ENCODE measurements at regions of chr1 and their contacts with region 1.

Region 1: DNA sequence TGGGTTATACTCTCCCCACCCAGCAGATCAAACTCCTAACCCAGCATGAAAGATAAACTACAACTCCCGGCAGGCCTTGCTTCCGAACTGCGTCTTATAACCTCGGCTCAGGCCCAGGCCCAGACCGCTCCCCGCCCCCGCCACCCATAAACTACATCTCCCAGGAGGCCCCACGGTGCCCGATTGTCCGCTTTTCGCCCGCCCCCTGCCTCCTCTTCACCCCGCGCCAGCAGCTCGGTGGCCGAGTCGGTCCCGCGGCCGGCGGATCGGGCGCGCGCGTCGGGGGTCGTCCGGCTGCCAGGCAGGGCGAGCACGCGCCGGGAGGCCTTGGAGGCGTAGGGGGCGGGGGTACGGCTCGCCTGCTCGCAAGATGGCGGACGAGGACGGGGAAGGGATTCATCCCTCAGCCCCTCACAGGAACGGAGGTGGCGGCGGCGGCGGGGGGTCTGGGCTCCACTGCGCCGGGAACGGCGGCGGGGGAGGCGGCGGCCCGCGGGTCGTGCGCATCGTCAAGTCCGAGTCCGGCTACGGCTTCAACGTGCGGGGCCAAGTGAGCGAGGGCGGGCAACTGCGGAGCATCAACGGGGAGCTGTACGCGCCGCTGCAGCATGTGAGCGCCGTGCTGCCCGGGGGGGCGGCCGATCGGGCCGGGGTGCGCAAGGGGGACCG is at the start of gene SNX27:
- DNase-seq: peak; percentile 81
- ATAC-seq: peak; percentile 96
- H3K4me3 Mint-ChIP-seq: peak within 1 kb of the TSS; percentile 95
- H3K27ac Mint-ChIP-seq: peak within 1 kb of the TSS; percentile 79
- H3K4me1 Mint-ChIP-seq: peaks cover 32% of the 10 kb centered on the region
- H3K27me3 Mint-ChIP-seq: peaks cover 9% of the 10 kb centered on the region
- CTCF ChIP-seq: no peak
- total RNA-seq, gene SNX27: 22.2 and 27.6 TPM in 2 replicates

Region 2: DNA sequence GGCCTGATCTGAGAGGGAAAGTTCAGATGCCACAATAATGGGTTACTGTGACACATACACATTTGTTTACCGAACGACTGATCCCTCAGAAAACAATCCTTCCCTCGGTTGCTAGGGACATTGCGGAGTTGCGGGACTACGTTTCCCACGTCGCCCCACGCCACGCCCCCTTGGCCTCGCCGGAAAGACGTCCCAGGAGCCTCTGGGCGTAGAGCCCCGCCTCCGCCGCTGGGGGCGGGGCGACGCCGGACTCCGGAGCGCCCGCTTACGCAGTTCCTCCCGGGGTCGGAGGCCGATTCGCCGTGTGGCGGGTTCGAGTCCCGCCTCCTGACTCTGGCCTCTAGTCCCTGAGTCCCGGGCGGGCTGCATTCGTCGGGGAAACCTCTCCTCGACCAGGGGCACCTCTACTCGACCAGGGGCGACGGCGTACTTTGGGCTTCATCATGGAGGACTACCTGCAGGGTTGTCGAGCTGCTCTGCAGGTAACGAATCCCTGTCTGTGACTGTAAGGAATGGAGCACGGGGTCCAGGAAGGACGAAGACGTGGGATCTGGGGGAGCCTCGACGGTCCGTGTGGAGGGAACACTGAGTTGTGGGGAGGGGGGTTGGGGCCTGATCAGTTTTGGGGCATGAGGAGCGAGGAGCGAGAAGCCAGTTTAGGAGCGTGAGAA is 603.6 kb before region 1 on chr1 and contains the start of gene PRUNE1:
- CTCF ChIA-PET with region 1: no interaction called
- POLR2A ChIA-PET with region 1: no interaction called
- intact Hi-C with region 1: loop called (anchors 5 kb)
- DNase-seq: peak; percentile 91
- ATAC-seq: peak; percentile 94
- H3K4me3 Mint-ChIP-seq: peak within 1 kb of the TSS; percentile 98
- H3K27ac Mint-ChIP-seq: peak within 1 kb of the TSS; percentile 93
- H3K4me1 Mint-ChIP-seq: peaks cover 66% of the 10 kb centered on the region
- H3K27me3 Mint-ChIP-seq: no peaks in the 10 kb centered on the region
- CTCF ChIP-seq: no peak
- total RNA-seq, gene PRUNE1: 12.9 and 14.2 TPM in 2 replicates

Region 3: GRCh38 chr1:151398691-151399065 is 213.3 kb before region 1 on chr1:
- CTCF ChIA-PET with region 1: no interaction called
- POLR2A ChIA-PET with region 1: no interaction called
- intact Hi-C with region 1: no loop called
- DNase-seq: peak; percentile 19
- ATAC-seq: peak; percentile 4
- H3K4me3 Mint-ChIP-seq: peak overlapping the region; percentile 89
- H3K27ac Mint-ChIP-seq: peak overlapping the region; percentile 98
- H3K4me1 Mint-ChIP-seq: peaks cover 31% of the 10 kb centered on the region
- H3K27me3 Mint-ChIP-seq: no peaks in the 10 kb centered on the region
- CTCF ChIP-seq: no peak

Region 4: GRCh38 chr1:151459331-151460046 is 152.5 kb before region 1 on chr1 and contains the start of gene POGZ:
- CTCF ChIA-PET with region 1: no interaction called
- POLR2A ChIA-PET with region 1: interaction called, 3 read pairs
- intact Hi-C with region 1: loop called (anchors 5 kb)
- DNase-seq: peak; percentile 84
- ATAC-seq: peak; percentile 68
- H3K4me3 Mint-ChIP-seq: peak within 1 kb of the TSS; percentile 89
- H3K27ac Mint-ChIP-seq: peak within 1 kb of the TSS; percentile 91
- H3K4me1 Mint-ChIP-seq: peaks cover 40% of the 10 kb centered on the region
- H3K27me3 Mint-ChIP-seq: peaks cover 15% of the 10 kb centered on the region
- CTCF ChIP-seq: no peak
- total RNA-seq, gene POGZ: 121 and 135 TPM in 2 replicates

Region 5: DNA sequence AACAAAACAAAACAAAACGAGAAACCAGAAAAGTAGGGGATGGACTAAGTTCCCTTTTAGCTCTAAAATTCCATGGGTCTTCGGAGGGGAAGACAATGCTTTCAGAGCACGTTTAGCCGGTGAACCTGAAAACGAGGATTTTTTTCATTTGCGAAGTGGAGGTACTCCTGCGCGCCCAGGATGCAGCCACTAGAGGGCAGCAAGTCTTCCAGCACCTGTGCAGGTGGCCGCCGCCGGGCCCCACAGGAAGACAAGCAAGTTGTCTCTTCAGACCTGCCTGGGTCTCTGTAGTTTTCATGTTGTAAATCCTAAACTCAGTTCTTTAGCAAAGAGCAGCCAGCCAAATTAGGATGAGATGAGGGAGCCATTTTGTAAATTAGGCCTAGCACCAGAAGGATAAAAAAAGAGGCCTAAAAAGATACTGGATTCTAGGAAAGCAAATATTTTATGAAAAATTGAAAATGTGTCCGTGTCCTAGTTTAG is 17.8 kb before region 1 on chr1:
- CTCF ChIA-PET with region 1: interaction called, 3 read pairs
- POLR2A ChIA-PET with region 1: no interaction called
- intact Hi-C with region 1: loop called (anchors 2 kb)
- DNase-seq: peak; percentile 66
- ATAC-seq: peak; percentile 97
- H3K4me3 Mint-ChIP-seq: peak overlapping the region; percentile 69
- H3K27ac Mint-ChIP-seq: peak overlapping the region; percentile 46
- H3K4me1 Mint-ChIP-seq: peaks cover 10% of the 10 kb centered on the region
- H3K27me3 Mint-ChIP-seq: peaks cover 11% of the 10 kb centered on the region
- CTCF ChIP-seq: peak; percentile 45

Region 6: GRCh38 chr1:151641229-151641628 is 29.3 kb after region 1 on chr1:
- CTCF ChIA-PET with region 1: no interaction called
- POLR2A ChIA-PET with region 1: no interaction called
- intact Hi-C with region 1: no loop called
- DNase-seq: no peak
- ATAC-seq: peak; percentile 42
- H3K4me3 Mint-ChIP-seq: no peak overlapping the region
- H3K27ac Mint-ChIP-seq: no peak overlapping the region
- H3K4me1 Mint-ChIP-seq: peaks cover 7% of the 10 kb centered on the region
- H3K27me3 Mint-ChIP-seq: no peaks in the 10 kb centered on the region
- CTCF ChIP-seq: no peak

Region 7: DNA sequence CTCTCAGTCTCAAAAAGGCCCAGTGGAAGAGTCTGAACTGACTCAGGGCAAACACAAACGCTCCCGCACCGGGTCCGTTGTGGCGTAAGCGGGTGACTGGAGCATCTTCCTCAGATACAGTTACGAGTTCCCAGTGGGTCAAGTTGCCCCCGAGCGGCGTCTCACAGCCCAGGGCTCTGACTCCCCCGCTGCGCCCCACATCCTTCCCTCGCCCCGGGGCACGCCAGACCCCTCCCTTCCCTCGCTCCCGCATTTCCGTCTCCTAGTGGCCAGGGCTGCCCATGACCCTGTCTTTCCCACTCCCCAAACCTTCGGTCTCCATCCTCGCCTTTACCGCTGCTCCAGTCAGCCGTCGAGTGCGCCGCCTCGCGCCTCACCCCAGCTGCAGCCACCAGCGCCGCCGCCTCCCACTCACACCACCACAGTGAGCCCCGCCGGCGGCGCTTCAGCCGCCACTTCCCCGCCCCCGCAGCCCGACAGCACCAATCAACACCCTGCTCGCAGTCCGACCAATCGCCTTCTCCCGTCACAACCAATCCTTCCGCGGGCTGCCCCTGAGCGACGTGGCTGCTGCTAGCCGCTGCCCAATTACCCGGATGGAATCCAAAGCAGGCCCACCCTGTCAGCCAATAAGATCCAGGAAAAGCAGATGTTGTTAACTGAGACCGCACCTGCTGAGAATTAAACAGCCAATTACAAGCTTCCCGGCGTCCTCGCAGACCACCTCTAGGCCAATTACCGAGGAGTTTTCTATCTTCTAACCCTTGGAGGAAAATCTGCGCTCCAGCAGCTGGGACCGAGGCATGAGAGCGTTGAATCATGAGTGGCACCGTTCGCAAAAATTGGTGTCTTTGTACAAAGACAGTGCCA is 178.3 kb after region 1 on chr1 and contains the start of gene TDRKH:
- CTCF ChIA-PET with region 1: no interaction called
- POLR2A ChIA-PET with region 1: interaction called, 5 read pairs
- intact Hi-C with region 1: loop called (anchors 1 kb)
- DNase-seq: peak; percentile 91
- ATAC-seq: peak; percentile 93
- H3K4me3 Mint-ChIP-seq: peak within 1 kb of the TSS; percentile 99
- H3K27ac Mint-ChIP-seq: peak within 1 kb of the TSS; percentile 91
- H3K4me1 Mint-ChIP-seq: peaks cover 21% of the 10 kb centered on the region
- H3K27me3 Mint-ChIP-seq: peaks cover 3% of the 10 kb centered on the region
- CTCF ChIP-seq: no peak
- total RNA-seq, gene TDRKH: 15.1 and 15.6 TPM in 2 replicates

Region 8: GRCh38 chr1:152001391-152002249 is 389.7 kb after region 1 on chr1:
- CTCF ChIA-PET with region 1: no interaction called
- POLR2A ChIA-PET with region 1: no interaction called
- intact Hi-C with region 1: no loop called
- DNase-seq: peak; percentile 51
- ATAC-seq: peak; percentile 85
- H3K4me3 Mint-ChIP-seq: no peak overlapping the region
- H3K27ac Mint-ChIP-seq: no peak overlapping the region
- H3K4me1 Mint-ChIP-seq: no peaks in the 10 kb centered on the region
- H3K27me3 Mint-ChIP-seq: peaks cover 20% of the 10 kb centered on the region
- CTCF ChIP-seq: peak; percentile 95

Region 9: GRCh38 chr1:152047730-152048402 is 435.9 kb after region 1 on chr1:
- CTCF ChIA-PET with region 1: no interaction called
- POLR2A ChIA-PET with region 1: no interaction called
- intact Hi-C with region 1: loop called (anchors 5 kb)
- DNase-seq: peak; percentile 72
- ATAC-seq: peak; percentile 94
- H3K4me3 Mint-ChIP-seq: peak overlapping the region; percentile 73
- H3K27ac Mint-ChIP-seq: peak overlapping the region; percentile 98
- H3K4me1 Mint-ChIP-seq: peaks cover 17% of the 10 kb centered on the region
- H3K27me3 Mint-ChIP-seq: peaks cover 2% of the 10 kb centered on the region
- CTCF ChIP-seq: no peak